ENCODE measurements at regions of chr22 and their contacts with region 1.

Region 1: GRCh38 chr22:50696797-50697561 is 24.4 kb downstream of the SHANK3 start:
- DNase-seq: peak in 8 of 10 donors; percentile 15 to 89 (median 46)

Region 2: GRCh38 chr22:50627642-50628542 is 69.1 kb before region 1 on chr22 and contains the start of gene ARSA:
- intact Hi-C with region 1: loop called (anchors 5 kb)
- DNase-seq: peak; percentile 63 to 97 (median 78)

Region 3: DNA sequence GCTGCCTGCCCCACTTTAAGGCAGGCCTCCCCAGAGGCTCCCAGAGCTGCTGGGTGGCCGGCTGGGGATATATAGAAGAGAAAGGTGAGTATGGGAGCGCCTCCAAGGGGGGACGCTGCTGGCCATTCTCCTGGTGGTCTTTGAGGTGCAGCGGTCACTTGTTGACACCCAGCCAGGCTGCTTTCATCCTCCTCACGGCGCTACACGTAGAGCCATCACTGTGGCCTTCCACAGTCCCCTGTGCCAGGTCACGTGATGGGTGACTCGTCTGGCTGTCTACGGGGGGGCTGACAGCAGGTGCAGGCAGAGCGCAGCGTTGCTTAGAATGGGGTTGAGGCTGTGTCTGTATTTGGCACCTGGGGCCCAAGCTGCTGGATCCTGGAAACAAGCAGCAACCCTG is 42.9 kb after region 1 on chr22:
- intact Hi-C with region 1: no loop called
- DNase-seq: peak in 4 of 10 donors; percentile 15 to 84 (median 55)

Measured in posterior cingulate gyrus (tissue), 11 donors.